ENCODE measurements at regions of chr19 and their contacts with region 1.

Region 1: DNA sequence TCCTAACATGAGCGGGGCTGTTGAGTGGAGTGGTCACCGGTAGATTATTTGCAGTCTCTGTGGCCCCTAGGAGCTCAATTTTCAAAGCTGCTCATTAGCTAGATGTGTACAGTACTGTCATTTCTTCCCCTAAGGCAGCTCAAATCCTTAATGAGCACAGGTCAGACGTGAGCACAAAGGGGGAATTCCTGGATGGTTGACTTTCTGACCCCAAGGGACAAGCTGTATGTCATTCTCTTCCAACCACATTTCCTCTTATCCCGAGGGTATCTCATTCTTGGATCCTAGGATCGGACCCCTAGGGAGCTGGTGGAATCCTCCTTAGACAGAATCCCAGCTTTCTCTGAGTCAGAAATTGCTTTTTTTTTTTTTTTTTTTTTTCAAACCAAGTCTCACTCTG is 5.7 kb upstream of the OR7G3 start:
- DNase-seq: no peak
- ATAC-seq: no peak
- H3K4me3 ChIP-seq: no peak overlapping the region
- H3K27ac ChIP-seq: no peak overlapping the region
- H3K4me1 ChIP-seq: no peaks in the 10 kb centered on the region
- H3K27me3 ChIP-seq: no peaks in the 10 kb centered on the region
- CTCF ChIP-seq: no peak

Region 2: GRCh38 chr19:8695501-8695900 is 436.9 kb before region 1 on chr19:
- CTCF ChIA-PET with region 1: interaction called, 13 read pairs
- POLR2A ChIA-PET with region 1: no interaction called
- in situ Hi-C with region 1: no loop called
- intact Hi-C with region 1: no loop called
- DNase-seq: no peak
- ATAC-seq: no peak
- H3K4me3 ChIP-seq: no peak overlapping the region
- H3K27ac ChIP-seq: no peak overlapping the region
- H3K4me1 ChIP-seq: no peaks in the 10 kb centered on the region
- H3K27me3 ChIP-seq: no peaks in the 10 kb centered on the region
- CTCF ChIP-seq: no peak

Region 3: DNA sequence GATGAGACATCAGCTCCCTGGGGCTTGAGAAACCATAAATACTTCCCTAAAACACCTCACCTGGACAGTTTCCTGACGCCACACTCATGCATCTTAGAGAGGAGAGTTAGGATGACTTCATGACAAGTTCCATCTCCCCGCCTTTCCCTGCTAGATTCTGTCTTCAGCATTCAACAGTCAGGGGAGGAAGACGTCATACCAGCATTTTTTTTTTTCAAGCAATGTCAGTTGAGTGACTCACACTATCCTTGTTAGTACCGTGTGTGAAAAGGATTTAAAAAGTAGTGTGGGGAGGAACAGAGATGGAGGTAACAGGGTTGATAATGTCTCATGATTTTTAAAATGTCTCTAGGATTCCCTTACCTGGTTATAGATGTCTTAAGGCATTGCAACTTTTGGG is 46.5 kb after region 1 on chr19 and contains the start of gene OR7D2:
- CTCF ChIA-PET with region 1: no interaction called
- POLR2A ChIA-PET with region 1: interaction called, 13 read pairs
- in situ Hi-C with region 1: no loop called
- intact Hi-C with region 1: no loop called
- DNase-seq: no peak
- ATAC-seq: no peak
- H3K4me3 ChIP-seq: no peak within 1 kb of the TSS
- H3K27ac ChIP-seq: no peak within 1 kb of the TSS
- H3K4me1 ChIP-seq: no peaks in the 10 kb centered on the region
- H3K27me3 ChIP-seq: no peaks in the 10 kb centered on the region
- CTCF ChIP-seq: no peak
- total RNA-seq, gene OR7D2: not detected